ENCODE measurements at regions of chr17 and their contacts with region 1.

Region 1: DNA sequence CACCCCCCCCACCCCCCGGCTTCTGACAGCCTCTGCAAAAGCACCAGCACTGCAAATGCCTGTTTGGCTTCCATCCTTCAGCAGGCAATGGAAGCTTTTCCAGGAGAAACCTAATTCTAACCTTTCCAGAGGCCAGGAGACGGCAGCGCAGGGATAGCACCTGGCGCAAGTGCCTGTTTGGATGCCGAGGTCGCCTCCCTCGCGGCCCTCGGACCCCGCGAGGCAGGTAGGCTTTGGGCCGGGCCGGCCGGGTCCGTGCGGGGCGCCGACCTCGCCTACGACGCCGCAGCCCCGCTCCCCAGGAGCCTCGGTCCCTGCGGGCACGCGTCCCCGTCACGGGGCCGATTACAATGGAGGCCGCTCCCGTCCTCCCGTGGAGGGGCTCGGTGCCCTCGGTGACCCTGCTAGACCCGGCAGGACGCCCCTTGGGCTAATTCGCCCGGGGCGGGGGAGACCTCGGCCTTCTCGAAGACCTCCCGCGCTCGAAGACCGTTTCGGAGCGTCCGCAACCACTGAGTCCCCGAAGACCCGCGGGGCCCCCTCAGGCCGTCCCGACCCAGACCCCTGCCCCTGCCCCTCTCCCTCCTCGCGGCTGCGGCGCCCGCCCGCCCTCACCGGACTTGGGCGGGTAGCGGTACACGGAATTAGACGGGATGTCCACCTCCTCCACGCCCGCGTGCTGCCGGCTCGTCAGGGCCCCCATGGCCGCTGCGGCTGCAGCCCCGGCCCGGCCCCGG is 587 bp downstream of the RNF157 start:
- DNase-seq: no peak
- ATAC-seq: peak; percentile 8; the same call in 2 of the 3 replicates
- H3K4me3 ChIP-seq: peak overlapping the region in 2 of 3 experiments; percentile 23 to 56; a peak in 2 of 6 replicates
- H3K27ac ChIP-seq: no peak overlapping the region
- H3K4me1 ChIP-seq: peaks cover 41% of the 10 kb centered on the region
- H3K27me3 ChIP-seq: peaks cover 12 to 52% of the 10 kb centered on the region in 2 experiments; a peak in 4 of 5 replicates
- CTCF ChIP-seq: no peak
- EP300 ChIP-seq: no peak
- POLR2A ChIP-seq: no peak
- RAD21 ChIP-seq: no peak

Region 2: GRCh38 chr17:76204277-76204676 is 35.4 kb before region 1 on chr17:
- CTCF ChIA-PET with region 1: no interaction called
- POLR2A ChIA-PET with region 1: no interaction called
- in situ Hi-C with region 1: no loop called
- intact Hi-C with region 1: no loop called
- DNase-seq: peak; percentile 43
- ATAC-seq: peak; percentile 47; the same call in 1 of the 3 replicates
- H3K4me3 ChIP-seq: no peak overlapping the region
- H3K27ac ChIP-seq: no peak overlapping the region
- H3K4me1 ChIP-seq: peaks cover 15% of the 10 kb centered on the region
- H3K27me3 ChIP-seq: no peaks in the 10 kb centered on the region
- CTCF ChIP-seq: no peak
- EP300 ChIP-seq: no peak
- POLR2A ChIP-seq: no peak
- RAD21 ChIP-seq: no peak

Region 3: GRCh38 chr17:76219670-76220383 is 19.9 kb before region 1 on chr17:
- CTCF ChIA-PET with region 1: no interaction called
- POLR2A ChIA-PET with region 1: no interaction called
- in situ Hi-C with region 1: no loop called
- intact Hi-C with region 1: loop called (anchors 2 kb)
- DNase-seq: no peak
- ATAC-seq: no peak
- H3K4me3 ChIP-seq: no peak overlapping the region
- H3K27ac ChIP-seq: no peak overlapping the region
- H3K4me1 ChIP-seq: peaks cover 9% of the 10 kb centered on the region
- H3K27me3 ChIP-seq: no peaks in the 10 kb centered on the region
- CTCF ChIP-seq: no peak
- EP300 ChIP-seq: no peak
- POLR2A ChIP-seq: no peak
- RAD21 ChIP-seq: no peak

Region 4: DNA sequence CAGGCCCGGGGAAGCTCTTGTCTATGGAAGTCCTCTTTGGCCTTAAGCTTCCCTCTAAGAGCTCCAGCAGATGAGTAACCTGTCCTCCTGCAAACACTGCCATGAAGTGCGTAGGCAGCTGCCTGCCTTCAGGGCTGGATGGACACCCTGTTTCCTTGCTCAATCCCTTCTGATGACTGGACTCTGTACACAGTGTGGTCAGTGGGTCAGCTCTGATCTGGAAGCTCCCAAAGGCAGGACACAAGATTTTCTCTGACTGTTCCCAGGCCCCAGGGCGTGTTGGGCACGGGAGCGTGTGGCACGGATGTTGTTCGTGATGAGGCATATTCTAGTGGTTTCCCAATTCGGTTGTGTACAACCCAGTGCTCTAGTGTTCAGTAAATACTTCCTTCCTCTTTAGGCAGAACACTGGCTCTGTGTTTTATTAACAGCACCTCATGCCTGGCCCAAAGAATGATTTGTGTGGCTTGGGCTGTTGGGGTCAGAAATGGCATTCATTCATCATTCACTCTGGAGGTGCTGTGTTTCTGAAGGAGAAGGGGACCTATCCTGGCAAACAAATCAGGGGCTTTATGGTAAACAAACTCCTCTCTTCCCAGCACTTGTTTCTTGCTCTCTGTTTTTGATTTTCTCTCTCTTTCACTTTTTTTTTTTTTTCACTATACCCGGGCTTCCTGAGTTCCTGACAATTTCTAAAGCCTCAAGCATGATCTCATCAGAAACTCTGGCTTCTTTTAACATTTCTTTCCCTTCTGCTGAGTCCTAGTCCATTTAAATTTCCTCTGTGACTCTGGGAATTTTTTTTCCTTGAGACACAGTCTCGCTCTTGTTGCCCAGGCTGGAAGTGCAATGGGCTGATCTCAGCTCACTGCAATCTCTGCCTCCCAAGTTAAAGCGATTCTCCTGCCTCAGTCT is 12.6 kb after region 1 on chr17:
- CTCF ChIA-PET with region 1: no interaction called
- POLR2A ChIA-PET with region 1: interaction called, 13 read pairs
- in situ Hi-C with region 1: no loop called
- intact Hi-C with region 1: no loop called
- DNase-seq: peak; percentile 94
- ATAC-seq: peak; percentile 94
- H3K4me3 ChIP-seq: peak overlapping the region; percentile 7 to 63 (median 11); a peak in 3 of 6 replicates
- H3K27ac ChIP-seq: peak overlapping the region; percentile 63
- H3K4me1 ChIP-seq: peaks cover 80% of the 10 kb centered on the region
- H3K27me3 ChIP-seq: no peaks in the 10 kb centered on the region
- CTCF ChIP-seq: no peak
- EP300 ChIP-seq: peak in 1 of 2 experiments; percentile 71; a peak in 2 of 4 replicates
- POLR2A ChIP-seq: peak in 1 of 2 experiments; percentile 64; a peak in 1 of 4 replicates
- RAD21 ChIP-seq: peak; percentile 35; the same call in 1 of the 2 replicates

Region 5: GRCh38 chr17:76278952-76279741 is 39.4 kb after region 1 on chr17:
- CTCF ChIA-PET with region 1: no interaction called
- POLR2A ChIA-PET with region 1: interaction called, 3 read pairs
- in situ Hi-C with region 1: no loop called
- intact Hi-C with region 1: loop called (anchors 1 kb)
- DNase-seq: peak; percentile 74
- ATAC-seq: peak; percentile 87
- H3K4me3 ChIP-seq: no peak overlapping the region
- H3K27ac ChIP-seq: no peak overlapping the region
- H3K4me1 ChIP-seq: peaks cover 25% of the 10 kb centered on the region
- H3K27me3 ChIP-seq: no peaks in the 10 kb centered on the region
- CTCF ChIP-seq: peak; percentile 98
- EP300 ChIP-seq: no peak
- POLR2A ChIP-seq: no peak
- RAD21 ChIP-seq: peak; percentile 98

Region 6: GRCh38 chr17:76327696-76328095 is 88.0 kb after region 1 on chr17:
- CTCF ChIA-PET with region 1: no interaction called
- POLR2A ChIA-PET with region 1: no interaction called
- in situ Hi-C with region 1: no loop called
- intact Hi-C with region 1: no loop called
- DNase-seq: no peak
- ATAC-seq: no peak
- H3K4me3 ChIP-seq: no peak overlapping the region
- H3K27ac ChIP-seq: no peak overlapping the region
- H3K4me1 ChIP-seq: no peaks in the 10 kb centered on the region
- H3K27me3 ChIP-seq: no peaks in the 10 kb centered on the region
- CTCF ChIP-seq: no peak
- EP300 ChIP-seq: no peak
- POLR2A ChIP-seq: no peak
- RAD21 ChIP-seq: no peak